Thyroid gland (tissue), 4 donors: ENCODE measurements at regions of chr12 and their contacts with region 1.

Region 1: GRCh38 chr12:53321074-53321814 is at the start of gene AAAS:
- DNase-seq: peak; percentile 97 to 98
- H3K4me3 ChIP-seq: peak within 1 kb of the TSS in 2 of 3 donors; percentile 58 to 82
- H3K27ac ChIP-seq: peak within 1 kb of the TSS; percentile 86 to 90 (median 87)
- H3K4me1 ChIP-seq: peaks cover 27 to 31% of the 10 kb centered on the region in 2 donors
- H3K27me3 ChIP-seq: no peaks in the 10 kb centered on the region
- CTCF ChIP-seq: peak; percentile 95 to 99 (median 98)
- POLR2A ChIP-seq: peak in 1 of 2 donors; percentile 63
- total RNA-seq, gene AAAS: 45.6 to 67.6 (median 47.2) TPM

Region 2: DNA sequence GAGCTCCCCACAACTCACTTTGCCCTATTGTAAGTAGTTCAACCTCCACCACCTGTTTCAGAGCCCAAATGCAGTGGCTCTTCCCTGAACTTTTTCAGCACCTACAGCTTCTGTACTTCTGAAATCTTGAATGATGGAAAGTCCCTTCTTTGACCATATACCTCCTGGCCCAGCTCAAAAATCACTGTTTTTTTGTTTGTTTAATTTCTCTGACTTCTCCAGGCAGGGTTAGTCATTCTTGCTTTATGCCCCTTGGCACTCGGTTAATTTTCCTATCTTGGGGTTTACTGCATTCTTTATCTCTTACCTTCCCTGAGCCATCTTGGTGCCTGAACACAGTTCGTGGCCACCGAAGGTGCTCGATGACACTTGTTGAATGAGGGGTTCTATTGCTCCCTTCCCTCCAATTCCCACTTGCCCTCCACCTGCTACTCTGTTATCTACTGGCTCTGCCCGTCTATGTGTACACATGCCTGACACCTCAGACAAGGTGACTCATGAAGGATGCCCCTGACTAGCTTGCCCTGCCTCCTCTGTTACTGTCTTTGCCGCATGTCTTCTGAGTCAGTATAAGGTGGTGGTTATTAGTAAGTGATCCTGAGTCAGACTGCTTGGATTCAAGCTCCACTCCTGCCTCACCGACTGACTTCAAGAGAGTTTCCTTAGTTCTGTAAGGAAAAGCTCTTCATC is 106.8 kb after region 1 on chr12:
- intact Hi-C with region 1: loop called (anchors 10 kb)
- DNase-seq: no peak
- H3K4me3 ChIP-seq: no peak overlapping the region
- H3K27ac ChIP-seq: no peak overlapping the region
- H3K4me1 ChIP-seq: no peaks in the 10 kb centered on the region
- H3K27me3 ChIP-seq: no peaks in the 10 kb centered on the region
- CTCF ChIP-seq: no peak
- POLR2A ChIP-seq: no peak

Region 3: DNA sequence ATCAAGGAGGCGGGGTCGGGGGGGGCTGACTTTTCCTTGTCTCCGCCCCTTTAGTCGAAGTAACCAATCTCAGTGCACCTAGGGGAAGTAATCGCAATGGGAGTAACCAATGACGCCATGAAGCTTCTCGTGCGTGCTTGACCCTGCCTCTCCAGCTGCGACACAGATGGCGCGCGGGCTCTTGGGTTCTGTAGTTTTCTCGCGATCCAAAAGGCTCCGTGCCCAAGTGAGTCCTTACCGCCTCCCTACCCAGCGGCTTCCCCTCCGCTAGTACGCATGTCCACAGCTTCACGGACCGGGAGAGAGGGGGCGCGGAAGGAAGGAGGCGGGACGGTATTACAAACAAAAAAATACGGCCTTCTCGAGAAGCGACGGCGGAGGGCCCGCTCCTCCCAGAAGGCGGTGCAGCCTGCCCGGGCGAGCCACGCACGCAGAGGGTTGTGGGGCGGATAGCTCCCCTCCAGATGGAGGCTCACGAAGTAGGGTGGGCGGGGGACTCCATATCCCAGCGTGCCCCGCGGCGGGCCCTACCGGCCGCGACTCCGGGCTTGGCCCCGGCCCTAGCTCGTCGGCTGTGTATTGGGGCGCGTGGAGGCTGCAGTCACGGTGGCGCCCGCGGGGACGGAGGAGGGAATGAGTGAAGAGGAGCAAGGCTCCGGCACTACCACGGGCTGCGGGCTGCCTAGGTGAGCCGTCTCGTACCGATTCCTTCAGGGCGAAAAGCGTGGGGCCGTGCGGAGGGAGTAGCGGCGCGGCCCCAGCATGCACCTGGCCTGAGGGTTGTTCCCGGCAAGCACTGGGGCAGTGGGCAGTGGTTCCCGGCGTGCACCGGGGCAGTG is 179.8 kb after region 1 on chr12 and contains the start of gene TARBP2:
- intact Hi-C with region 1: loop called (anchors 10 kb)
- DNase-seq: peak; percentile 99
- H3K4me3 ChIP-seq: peak within 1 kb of the TSS; percentile 29 to 59 (median 31)
- H3K27ac ChIP-seq: peak within 1 kb of the TSS; percentile 91 to 99 (median 97)
- H3K4me1 ChIP-seq: peaks cover 10 to 40% of the 10 kb centered on the region in 2 donors
- H3K27me3 ChIP-seq: no peaks in the 10 kb centered on the region
- CTCF ChIP-seq: no peak
- POLR2A ChIP-seq: peak; percentile 23 to 56
- total RNA-seq, gene TARBP2: 31.2 to 44.8 (median 34.7) TPM

Region 4: GRCh38 chr12:54526812-54527630 is 1205.8 kb after region 1 on chr12:
- intact Hi-C with region 1: no loop called
- DNase-seq: peak; percentile 38 to 44
- H3K4me3 ChIP-seq: no peak overlapping the region
- H3K27ac ChIP-seq: no peak overlapping the region
- H3K4me1 ChIP-seq: no peaks in the 10 kb centered on the region
- H3K27me3 ChIP-seq: no peaks in the 10 kb centered on the region
- CTCF ChIP-seq: peak; percentile 22 to 52 (median 38)
- POLR2A ChIP-seq: no peak